WTC11 (cell line): ENCODE measurements at regions of chr7 and their contacts with region 1.

Region 1: DNA sequence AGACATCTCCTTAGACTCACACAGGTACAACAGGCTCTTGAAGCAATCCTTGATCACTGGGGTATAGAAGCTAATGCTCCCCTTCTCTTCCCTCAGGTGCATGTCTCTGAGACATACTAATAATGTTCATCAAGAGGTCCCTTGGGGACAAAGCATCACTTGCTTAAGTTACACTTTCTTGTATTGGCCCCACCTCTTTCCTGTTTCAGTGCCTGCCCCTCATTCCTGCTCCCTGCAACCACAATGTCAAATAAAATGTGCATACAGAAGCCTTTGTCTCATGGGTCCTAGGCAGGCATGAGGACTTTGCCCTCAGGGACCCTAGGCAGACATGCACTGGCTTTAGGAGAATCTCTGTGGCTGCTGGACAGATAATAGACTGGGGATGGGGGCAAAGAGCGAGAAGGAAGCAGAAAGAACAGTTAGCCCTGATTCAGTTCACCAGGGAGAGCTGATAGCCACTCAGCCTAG is 175.0 kb upstream of the NPY start:
- DNase-seq: no peak
- ATAC-seq: no peak
- H3K4me3 Mint-ChIP-seq: no peak overlapping the region
- H3K27ac Mint-ChIP-seq: no peak overlapping the region
- H3K4me1 Mint-ChIP-seq: peaks cover 11% of the 10 kb centered on the region
- H3K27me3 Mint-ChIP-seq: no peaks in the 10 kb centered on the region
- CTCF ChIP-seq: no peak

Region 2: DNA sequence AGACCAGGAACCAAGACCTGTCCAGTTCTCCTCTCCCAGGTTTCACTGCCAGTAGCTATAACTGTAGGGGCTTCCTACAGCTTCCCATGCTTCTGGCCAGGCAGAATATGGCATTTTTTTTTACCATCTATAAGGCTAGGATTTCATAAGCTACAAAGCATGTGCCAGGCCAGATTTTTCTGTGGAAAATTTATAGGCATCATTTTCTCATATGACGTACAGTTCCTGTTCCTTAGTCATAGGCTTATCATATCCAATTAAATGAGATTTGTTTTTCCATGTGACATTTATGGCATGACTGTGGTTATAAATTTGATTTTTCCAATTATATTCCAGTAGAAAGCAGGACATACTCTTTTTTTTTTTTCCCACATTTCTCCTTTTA is 33.5 kb before region 1 on chr7:
- CTCF ChIA-PET with region 1: no interaction called
- POLR2A ChIA-PET with region 1: interaction called, 10 read pairs
- DNase-seq: no peak
- ATAC-seq: no peak
- H3K4me3 Mint-ChIP-seq: no peak overlapping the region
- H3K27ac Mint-ChIP-seq: no peak overlapping the region
- H3K4me1 Mint-ChIP-seq: peaks cover 2% of the 10 kb centered on the region; the same call in 1 of the 2 replicates
- H3K27me3 Mint-ChIP-seq: no peaks in the 10 kb centered on the region
- CTCF ChIP-seq: no peak